ENCODE measurements at regions of chr22 and their contacts with region 1.

Region 1: GRCh38 chr22:41746567-41747400 is 47.5 kb downstream of the MEI1 start:
- DNase-seq: peak; percentile 79
- H3K4me3 ChIP-seq: no peak overlapping the region
- H3K27ac ChIP-seq: no peak overlapping the region
- H3K4me1 ChIP-seq: no peaks in the 10 kb centered on the region
- H3K27me3 ChIP-seq: peaks cover 16 to 19% of the 10 kb centered on the region in 2 experiments
- CTCF ChIP-seq: peak; percentile 83 to 89
- POLR2A ChIP-seq: no peak

Region 2: DNA sequence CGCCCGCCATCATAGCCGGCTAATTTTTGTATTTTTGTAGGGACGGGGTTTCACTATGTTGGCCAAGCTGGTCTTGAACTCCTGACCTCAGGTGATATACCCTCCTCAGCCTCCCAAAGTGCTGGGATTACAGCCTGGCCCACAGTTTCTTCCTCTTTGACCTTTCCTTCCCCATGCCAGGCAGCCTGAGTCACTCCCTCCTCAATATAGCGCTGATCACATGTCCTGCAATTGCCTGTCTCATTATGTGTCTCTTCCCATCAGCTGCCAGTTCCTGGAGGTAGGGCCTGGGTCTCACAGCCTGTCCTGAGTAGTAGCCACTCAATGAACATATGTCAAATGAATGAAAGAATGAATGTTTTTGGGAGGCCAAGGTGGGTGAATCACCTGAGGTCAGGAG is 10.7 kb after region 1 on chr22:
- CTCF ChIA-PET with region 1: interaction called, 23 read pairs
- POLR2A ChIA-PET with region 1: no interaction called
- dilution Hi-C with region 1: no loop called
- intact Hi-C with region 1: no loop called
- DNase-seq: no peak
- H3K4me3 ChIP-seq: no peak overlapping the region
- H3K27ac ChIP-seq: no peak overlapping the region
- H3K4me1 ChIP-seq: no peaks in the 10 kb centered on the region
- H3K27me3 ChIP-seq: no peaks in the 10 kb centered on the region
- CTCF ChIP-seq: no peak
- POLR2A ChIP-seq: no peak

Region 3: DNA sequence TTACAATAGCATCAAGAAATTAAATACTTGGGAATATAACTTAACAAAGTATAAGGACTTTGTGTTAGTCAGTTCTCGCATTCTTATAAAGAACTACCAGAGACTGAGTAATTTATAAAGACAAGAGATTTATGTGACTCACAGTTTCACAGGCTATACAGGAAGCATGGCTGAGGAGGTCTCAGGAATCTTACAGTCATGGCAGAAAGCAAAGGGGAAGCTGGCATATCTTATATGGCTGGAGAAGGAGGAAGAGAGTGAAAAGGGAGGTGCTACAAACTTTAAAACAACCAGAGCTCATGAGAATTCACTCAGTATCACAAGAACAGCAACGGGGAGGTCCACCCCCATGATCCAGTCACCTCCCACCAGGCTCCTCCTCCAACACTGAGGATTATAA is 21.6 kb after region 1 on chr22:
- CTCF ChIA-PET with region 1: interaction called, 23 read pairs
- POLR2A ChIA-PET with region 1: no interaction called
- dilution Hi-C with region 1: no loop called
- intact Hi-C with region 1: no loop called
- DNase-seq: peak; percentile 59
- H3K4me3 ChIP-seq: no peak overlapping the region
- H3K27ac ChIP-seq: peak overlapping the region; percentile 15
- H3K4me1 ChIP-seq: peaks cover 4% of the 10 kb centered on the region
- H3K27me3 ChIP-seq: peaks cover 0 to 3% of the 10 kb centered on the region in 2 experiments
- CTCF ChIP-seq: no peak
- POLR2A ChIP-seq: no peak

Region 4: DNA sequence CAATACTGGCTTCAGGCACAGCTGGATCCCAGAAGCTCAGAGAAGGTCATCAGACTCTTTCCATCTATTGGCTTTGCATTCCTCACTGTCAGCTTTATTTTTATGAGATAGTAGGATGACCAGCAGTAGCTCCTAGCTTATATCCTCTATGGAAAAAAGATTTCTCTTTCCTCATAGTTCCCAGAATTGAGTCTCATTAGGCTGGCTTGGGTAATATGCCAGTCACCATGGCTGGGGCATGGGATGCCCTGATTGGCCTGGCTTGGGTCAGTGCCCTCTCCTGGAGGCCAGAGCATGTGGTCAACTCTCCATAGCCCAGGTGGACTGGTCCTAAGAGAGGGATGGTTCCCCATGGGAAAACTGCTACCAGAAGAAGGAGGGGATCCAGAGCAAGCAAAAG is 39.6 kb after region 1 on chr22:
- CTCF ChIA-PET with region 1: interaction called, 24 read pairs
- POLR2A ChIA-PET with region 1: no interaction called
- dilution Hi-C with region 1: no loop called
- intact Hi-C with region 1: no loop called
- DNase-seq: no peak
- H3K4me3 ChIP-seq: no peak overlapping the region
- H3K27ac ChIP-seq: no peak overlapping the region
- H3K4me1 ChIP-seq: peaks cover 2% of the 10 kb centered on the region
- H3K27me3 ChIP-seq: no peaks in the 10 kb centered on the region
- CTCF ChIP-seq: no peak
- POLR2A ChIP-seq: no peak

Region 5: DNA sequence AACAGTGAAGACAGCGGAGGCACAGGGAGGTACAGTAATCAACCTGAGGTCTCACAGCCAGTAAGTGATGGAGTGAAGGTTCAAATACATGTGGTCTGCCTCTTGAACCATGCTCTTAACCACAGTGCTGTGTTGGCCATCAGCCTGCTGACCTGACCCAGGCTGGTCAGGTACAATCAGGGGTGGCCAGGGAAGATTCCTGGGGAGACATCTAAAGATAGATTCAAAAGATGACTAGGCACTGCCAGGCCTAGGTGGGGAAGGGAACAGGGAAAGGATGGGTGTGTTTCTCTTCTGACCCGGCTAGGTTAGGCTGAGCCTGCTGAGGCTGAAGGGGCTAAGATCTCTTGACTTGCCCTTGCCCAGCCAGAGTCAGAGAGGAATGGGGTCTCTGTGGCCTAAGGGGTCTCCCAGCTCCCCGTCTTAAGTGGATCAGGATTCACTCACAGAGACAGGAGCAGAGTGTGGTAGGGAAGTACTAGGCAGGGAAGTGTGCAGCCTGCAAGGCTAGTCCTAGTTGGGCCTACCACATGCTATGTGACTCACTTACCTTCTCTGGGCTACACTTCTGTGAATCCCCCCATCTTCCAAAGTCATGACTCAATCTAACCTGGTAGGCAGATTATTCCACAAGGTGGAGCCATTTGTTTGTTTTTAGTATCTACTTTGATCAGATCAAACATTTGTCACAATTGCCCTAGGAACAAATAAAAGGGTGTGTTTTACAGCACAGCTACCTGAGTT is 75.7 kb after region 1 on chr22:
- CTCF ChIA-PET with region 1: interaction called, 10 read pairs
- POLR2A ChIA-PET with region 1: no interaction called
- dilution Hi-C with region 1: no loop called
- intact Hi-C with region 1: no loop called
- DNase-seq: peak; percentile 65
- H3K4me3 ChIP-seq: no peak overlapping the region
- H3K27ac ChIP-seq: no peak overlapping the region
- H3K4me1 ChIP-seq: peaks cover 3% of the 10 kb centered on the region
- H3K27me3 ChIP-seq: no peaks in the 10 kb centered on the region
- CTCF ChIP-seq: peak; percentile 17 to 29
- POLR2A ChIP-seq: no peak

Region 6: GRCh38 chr22:41857155-41857859 is 110.5 kb after region 1 on chr22:
- CTCF ChIA-PET with region 1: interaction called, 46 read pairs
- POLR2A ChIA-PET with region 1: no interaction called
- dilution Hi-C with region 1: no loop called
- intact Hi-C with region 1: loop called (anchors 1 kb)
- DNase-seq: peak; percentile 70
- H3K4me3 ChIP-seq: no peak overlapping the region
- H3K27ac ChIP-seq: no peak overlapping the region
- H3K4me1 ChIP-seq: peaks cover 10% of the 10 kb centered on the region
- H3K27me3 ChIP-seq: no peaks in the 10 kb centered on the region
- CTCF ChIP-seq: peak; percentile 60 to 65
- POLR2A ChIP-seq: no peak